CD8-positive, alpha-beta T cell (primary cell): ENCODE measurements at regions of chr11 and their contacts with region 1.

Region 1: DNA sequence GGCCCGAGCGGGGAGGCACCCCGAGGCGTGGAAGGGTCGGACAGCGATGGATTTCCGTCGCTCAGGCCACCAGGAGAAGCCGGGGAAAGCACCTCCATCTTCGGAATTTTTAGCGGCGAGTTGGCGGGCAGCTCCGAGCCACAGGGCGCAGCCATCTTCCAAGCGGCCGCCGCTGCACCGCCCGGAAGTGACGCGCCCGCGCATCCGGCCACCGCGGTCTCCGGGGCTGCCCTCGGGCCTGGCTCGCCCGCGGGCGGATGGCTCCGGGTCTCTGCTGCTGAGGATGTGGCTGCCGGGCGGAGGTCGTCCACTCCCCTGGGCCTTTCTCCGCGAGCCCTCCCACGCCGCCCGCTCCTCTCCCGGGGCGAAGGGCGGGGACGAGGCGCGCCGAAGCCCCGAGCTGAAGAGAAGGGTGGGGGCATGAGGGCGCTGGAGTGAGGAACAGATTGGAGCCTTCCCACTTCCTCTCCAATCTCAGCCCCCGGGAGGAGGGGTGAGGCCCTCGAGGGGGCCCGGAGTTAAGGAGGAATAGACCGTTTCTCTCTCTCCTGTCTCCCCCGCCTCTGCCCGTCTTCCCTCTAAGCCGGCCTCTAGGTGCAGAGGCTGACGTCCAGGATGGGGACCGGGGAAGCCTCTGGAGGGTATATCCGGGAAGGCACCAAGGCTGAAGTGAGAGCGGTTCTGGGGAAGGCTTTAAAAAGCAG is at the start of gene MSANTD2:
- DNase-seq: peak; percentile 57 to 88 (median 80)
- ATAC-seq: peak; percentile 76
- H3K4me3 ChIP-seq: peak within 1 kb of the TSS; percentile 72 to 84
- H3K4me3 Mint-ChIP-seq: peak within 1 kb of the TSS; percentile 96
- H3K27ac ChIP-seq: peak within 1 kb of the TSS; percentile 91 to 98
- H3K27ac Mint-ChIP-seq: peak within 1 kb of the TSS; percentile 96
- H3K4me1 ChIP-seq: peaks cover 17% of the 10 kb centered on the region
- H3K4me1 Mint-ChIP-seq: peaks cover 32% of the 10 kb centered on the region
- H3K27me3 ChIP-seq: no peaks in the 10 kb centered on the region
- H3K27me3 Mint-ChIP-seq: no peaks in the 10 kb centered on the region
- CTCF ChIP-seq: no peak
- total RNA-seq, gene MSANTD2: 4.3 to 4.5 TPM

Region 2: GRCh38 chr11:124622531-124623451 is 177.6 kb before region 1 on chr11 and contains the start of gene TBRG1:
- CTCF ChIA-PET with region 1: no interaction called
- POLR2A ChIA-PET with region 1: interaction called, 5 read pairs
- intact Hi-C with region 1: loop called in 1 of 2 experiments (anchors 1 kb)
- DNase-seq: peak; percentile 62 to 95 (median 84)
- ATAC-seq: peak; percentile 97
- H3K4me3 ChIP-seq: peak within 1 kb of the TSS; percentile 94 to 100
- H3K4me3 Mint-ChIP-seq: peak within 1 kb of the TSS; percentile 97
- H3K27ac ChIP-seq: peak within 1 kb of the TSS; percentile 95 to 97
- H3K27ac Mint-ChIP-seq: peak within 1 kb of the TSS; percentile 99
- H3K4me1 ChIP-seq: peaks cover 16% of the 10 kb centered on the region
- H3K4me1 Mint-ChIP-seq: peaks cover 43% of the 10 kb centered on the region
- H3K27me3 ChIP-seq: no peaks in the 10 kb centered on the region
- H3K27me3 Mint-ChIP-seq: peaks cover 6% of the 10 kb centered on the region
- CTCF ChIP-seq: no peak
- total RNA-seq, gene TBRG1: 59.2 to 61.0 TPM

Region 3: DNA sequence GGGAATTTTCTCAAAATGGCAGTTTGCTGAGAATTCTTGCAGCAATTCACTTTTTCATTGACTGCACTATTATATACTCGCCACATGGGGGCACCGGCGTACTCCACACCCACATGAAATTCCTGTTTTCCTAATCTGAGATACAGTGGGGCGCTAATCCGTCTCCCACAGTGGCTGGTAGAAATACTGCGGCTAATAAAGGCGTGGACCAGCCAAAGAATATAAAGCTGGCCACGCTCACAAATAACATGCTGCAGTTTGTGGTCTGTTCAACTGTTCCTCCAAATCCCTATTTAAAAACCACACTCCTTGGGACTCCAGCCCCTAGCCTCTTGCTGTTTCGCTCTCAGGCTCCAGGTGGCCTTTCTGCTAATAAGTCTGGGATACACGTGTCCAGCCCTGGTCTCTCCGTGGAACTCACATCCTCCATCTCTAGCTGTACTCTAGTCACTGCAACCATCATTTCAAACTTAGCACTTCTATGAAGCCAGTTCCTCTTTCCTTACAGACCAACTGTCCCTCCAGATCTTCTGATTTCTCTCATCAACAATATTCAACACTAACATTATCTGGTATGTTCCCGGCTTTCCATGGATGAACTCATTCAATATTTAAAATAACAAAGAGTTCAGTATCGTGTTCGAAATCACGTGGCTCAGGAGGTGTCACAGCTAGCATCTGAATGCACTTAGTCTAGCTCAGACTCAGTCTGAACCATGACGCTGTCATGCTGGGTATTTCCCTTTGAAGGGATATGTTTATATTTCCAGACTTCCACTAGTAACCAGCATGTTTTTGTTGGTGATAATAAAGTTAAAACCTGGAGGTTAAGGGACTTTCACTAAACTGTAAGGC is 155.7 kb before region 1 on chr11:
- CTCF ChIA-PET with region 1: interaction called, 10 read pairs
- POLR2A ChIA-PET with region 1: no interaction called
- intact Hi-C with region 1: no loop called
- DNase-seq: peak in 6 of 9 experiments; percentile 4 to 67 (median 44)
- ATAC-seq: peak; percentile 79
- H3K4me3 ChIP-seq: no peak overlapping the region
- H3K4me3 Mint-ChIP-seq: no peak overlapping the region
- H3K27ac ChIP-seq: no peak overlapping the region
- H3K27ac Mint-ChIP-seq: no peak overlapping the region
- H3K4me1 ChIP-seq: no peaks in the 10 kb centered on the region
- H3K4me1 Mint-ChIP-seq: no peaks in the 10 kb centered on the region
- H3K27me3 ChIP-seq: no peaks in the 10 kb centered on the region
- H3K27me3 Mint-ChIP-seq: no peaks in the 10 kb centered on the region
- CTCF ChIP-seq: peak; percentile 79

Region 4: DNA sequence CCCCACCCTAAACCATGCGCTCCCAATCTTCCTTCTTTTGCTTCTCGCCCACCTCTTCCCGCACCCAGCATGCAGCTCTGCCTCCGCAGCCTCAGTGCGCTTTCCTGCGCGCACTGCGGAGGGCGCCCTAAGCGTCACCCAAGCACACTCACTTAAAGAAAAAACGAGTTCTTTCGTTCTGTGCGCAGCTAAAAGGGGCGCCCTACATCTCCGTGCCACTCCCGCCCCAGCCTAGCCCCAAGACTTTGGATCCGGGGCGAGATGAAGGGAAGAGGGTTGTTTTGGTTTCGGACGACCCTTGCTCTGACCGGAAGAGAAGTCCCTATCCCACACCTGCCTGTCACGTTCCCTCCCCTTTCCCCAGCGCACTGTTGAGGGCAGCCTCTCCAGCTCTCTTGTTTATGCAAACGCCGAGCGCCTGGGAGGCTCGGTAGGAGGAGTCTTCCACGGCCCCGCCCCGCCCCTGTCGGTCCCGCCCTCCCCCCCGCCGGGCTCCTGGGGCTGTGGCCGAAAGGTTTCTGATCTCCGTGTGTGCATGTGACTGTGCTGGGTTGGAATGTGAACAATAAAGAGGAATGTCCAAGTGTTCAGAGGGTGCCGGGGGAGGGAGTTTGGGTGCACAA is 53.6 kb before region 1 on chr11:
- CTCF ChIA-PET with region 1: interaction called, 5 read pairs
- POLR2A ChIA-PET with region 1: interaction called, 26 read pairs
- intact Hi-C with region 1: loop called (anchors 1 to 2 kb)
- DNase-seq: peak; percentile 64 to 90 (median 79)
- ATAC-seq: peak; percentile 92
- H3K4me3 ChIP-seq: peak overlapping the region; percentile 87 to 98
- H3K4me3 Mint-ChIP-seq: peak overlapping the region; percentile 95
- H3K27ac ChIP-seq: peak overlapping the region; percentile 58 to 80
- H3K27ac Mint-ChIP-seq: peak overlapping the region; percentile 91
- H3K4me1 ChIP-seq: peaks cover 11% of the 10 kb centered on the region
- H3K4me1 Mint-ChIP-seq: peaks cover 15% of the 10 kb centered on the region
- H3K27me3 ChIP-seq: no peaks in the 10 kb centered on the region
- H3K27me3 Mint-ChIP-seq: peaks cover 2% of the 10 kb centered on the region
- CTCF ChIP-seq: peak; percentile 55

Region 5: GRCh38 chr11:124758317-124759203 is 41.8 kb before region 1 on chr11:
- CTCF ChIA-PET with region 1: interaction called, 46 read pairs
- POLR2A ChIA-PET with region 1: interaction called, 9 read pairs
- intact Hi-C with region 1: loop called (anchors 1 kb)
- DNase-seq: peak; percentile 42 to 78 (median 70)
- ATAC-seq: peak; percentile 72
- H3K4me3 ChIP-seq: peak overlapping the region; percentile 6 to 16
- H3K4me3 Mint-ChIP-seq: peak overlapping the region; percentile 58
- H3K27ac ChIP-seq: no peak overlapping the region
- H3K27ac Mint-ChIP-seq: no peak overlapping the region
- H3K4me1 ChIP-seq: peaks cover 34% of the 10 kb centered on the region
- H3K4me1 Mint-ChIP-seq: peaks cover 33% of the 10 kb centered on the region
- H3K27me3 ChIP-seq: peaks cover 32 to 39% of the 10 kb centered on the region in 2 experiments
- H3K27me3 Mint-ChIP-seq: peaks cover 40% of the 10 kb centered on the region
- CTCF ChIP-seq: peak; percentile 81

Region 6: DNA sequence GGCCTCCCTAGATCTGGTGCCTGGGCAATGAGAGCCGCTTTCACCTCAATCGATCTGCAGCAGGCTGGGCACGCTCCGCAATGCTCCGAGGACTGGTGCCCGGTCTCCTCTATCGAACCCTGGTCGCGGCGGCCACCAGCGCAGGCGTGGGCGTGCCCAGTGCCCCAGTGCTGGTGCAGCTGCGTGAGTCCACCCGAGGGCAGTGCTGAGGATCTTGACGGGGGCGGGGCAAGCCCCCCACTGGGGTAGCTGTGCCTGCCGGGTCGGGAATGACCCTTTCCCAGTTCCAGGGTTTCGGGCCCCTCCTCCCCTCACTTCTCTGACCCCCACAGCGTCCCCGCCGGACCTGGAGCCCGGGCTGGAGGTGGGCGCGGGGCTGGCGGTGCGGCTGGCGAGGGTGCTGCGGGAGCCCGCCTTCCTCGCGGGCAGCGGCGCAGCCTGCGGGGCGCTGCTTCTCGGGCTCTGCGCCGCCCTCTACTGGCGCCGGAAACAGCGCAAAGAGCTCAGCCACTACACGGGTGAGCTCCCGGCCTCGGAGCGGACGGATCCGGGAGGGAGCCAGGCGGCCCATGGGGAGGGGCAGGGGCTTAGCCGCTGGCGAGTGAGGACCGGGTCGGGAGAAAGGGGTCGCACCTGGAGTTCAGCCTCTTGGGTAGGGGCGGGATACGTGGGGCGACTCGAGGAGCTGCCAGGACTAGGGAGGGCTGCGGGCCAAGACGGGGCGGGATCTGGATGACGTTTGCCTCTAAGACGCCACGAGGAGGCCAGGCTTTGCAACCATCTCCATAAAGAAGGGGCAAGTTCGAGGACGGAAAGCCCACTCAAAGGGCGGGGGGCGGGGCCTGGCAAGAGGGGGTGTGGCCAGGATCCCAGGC is 75.8 kb after region 1 on chr11:
- CTCF ChIA-PET with region 1: interaction called, 3 read pairs
- POLR2A ChIA-PET with region 1: interaction called, 5 read pairs
- intact Hi-C with region 1: loop called (anchors 1 to 2 kb)
- DNase-seq: peak; percentile 60 to 90 (median 76)
- ATAC-seq: peak; percentile 91
- H3K4me3 ChIP-seq: peak overlapping the region; percentile 75 to 88
- H3K4me3 Mint-ChIP-seq: peak overlapping the region; percentile 93
- H3K27ac ChIP-seq: peak overlapping the region; percentile 77 to 96
- H3K27ac Mint-ChIP-seq: peak overlapping the region; percentile 92
- H3K4me1 ChIP-seq: peaks cover 16% of the 10 kb centered on the region
- H3K4me1 Mint-ChIP-seq: peaks cover 24% of the 10 kb centered on the region
- H3K27me3 ChIP-seq: no peaks in the 10 kb centered on the region
- H3K27me3 Mint-ChIP-seq: peaks cover 27% of the 10 kb centered on the region
- CTCF ChIP-seq: peak; percentile 65

Region 7: GRCh38 chr11:126277780-126278179 is 1477.4 kb after region 1 on chr11:
- CTCF ChIA-PET with region 1: no interaction called
- POLR2A ChIA-PET with region 1: no interaction called
- intact Hi-C with region 1: loop called in 1 of 2 experiments (anchors 5 kb)
- DNase-seq: no peak
- ATAC-seq: no peak
- H3K4me3 ChIP-seq: no peak overlapping the region
- H3K4me3 Mint-ChIP-seq: no peak overlapping the region
- H3K27ac ChIP-seq: no peak overlapping the region
- H3K27ac Mint-ChIP-seq: no peak overlapping the region
- H3K4me1 ChIP-seq: peaks cover 19% of the 10 kb centered on the region
- H3K4me1 Mint-ChIP-seq: peaks cover 30% of the 10 kb centered on the region
- H3K27me3 ChIP-seq: no peaks in the 10 kb centered on the region
- H3K27me3 Mint-ChIP-seq: no peaks in the 10 kb centered on the region
- CTCF ChIP-seq: no peak